ENCODE measurements at regions of chr4 and their contacts with region 1.

Region 1: DNA sequence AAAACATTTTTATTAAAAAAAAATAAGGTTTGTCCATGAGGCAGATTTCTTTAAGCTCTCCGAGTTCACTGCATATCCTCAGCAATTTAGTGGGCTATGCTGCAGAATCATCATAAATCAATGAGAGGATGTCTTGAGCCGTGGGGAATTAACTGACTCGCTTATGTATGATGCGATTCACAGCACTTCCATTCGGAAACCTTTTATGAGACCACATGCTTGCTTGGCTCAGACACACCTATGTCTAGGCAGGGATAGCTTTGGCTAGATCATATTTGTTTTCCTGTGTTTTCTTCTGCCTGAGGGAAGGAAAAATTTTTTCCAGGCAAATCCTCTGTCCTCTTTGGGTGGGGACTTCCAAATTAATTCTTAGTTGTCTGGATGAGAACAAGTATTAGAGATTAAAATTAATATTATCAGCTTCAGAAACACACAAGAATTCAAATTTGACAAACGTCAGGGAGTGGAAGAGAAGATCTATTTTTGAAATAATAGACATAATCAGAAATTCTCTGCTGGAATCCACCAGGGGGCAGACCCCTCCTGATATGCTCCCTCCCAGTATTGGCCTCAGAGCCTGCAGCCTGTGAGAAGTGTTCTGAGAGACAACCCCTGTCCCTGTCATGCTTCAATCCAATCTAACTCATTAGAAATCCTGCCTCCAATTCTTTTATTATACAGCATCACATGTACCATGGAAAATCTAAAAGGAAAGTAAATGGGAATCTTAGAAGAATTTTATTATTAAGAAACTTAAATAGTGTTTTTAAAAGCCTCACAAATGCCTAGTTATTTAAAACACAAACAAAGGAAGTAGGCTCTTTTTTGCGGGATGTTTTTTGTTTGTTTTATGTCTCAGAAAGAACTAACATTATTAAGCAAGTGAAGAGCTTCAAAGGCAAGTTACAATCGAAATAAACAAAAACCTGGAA is 345.1 kb upstream of the TACR3 start:
- DNase-seq: peak; percentile 51 to 59
- H3K4me3 ChIP-seq: no peak overlapping the region
- H3K27ac ChIP-seq: no peak overlapping the region
- H3K4me1 ChIP-seq: no peaks in the 10 kb centered on the region
- H3K27me3 ChIP-seq: no peaks in the 10 kb centered on the region
- CTCF ChIP-seq: peak in 5 of 6 experiments; percentile 17 to 60 (median 50)
- POLR2A ChIP-seq: no peak

Region 2: GRCh38 chr4:104860238-104861123 is 795.6 kb after region 1 on chr4:
- intact Hi-C with region 1: loop called (anchors 10 kb)
- DNase-seq: peak; percentile 58 to 60
- H3K4me3 ChIP-seq: no peak overlapping the region
- H3K27ac ChIP-seq: no peak overlapping the region
- H3K4me1 ChIP-seq: no peaks in the 10 kb centered on the region
- H3K27me3 ChIP-seq: no peaks in the 10 kb centered on the region
- CTCF ChIP-seq: peak; percentile 79 to 94 (median 90)
- POLR2A ChIP-seq: no peak